ENCODE measurements at regions of chr6 and their contacts with region 1.

Region 1: GRCh38 chr6:109455502-109456282 is at the start of gene MICAL1:
- DNase-seq: peak; percentile 79
- ATAC-seq: peak; percentile 54
- H3K4me3 Mint-ChIP-seq: peak within 1 kb of the TSS; percentile 90
- H3K27ac Mint-ChIP-seq: peak within 1 kb of the TSS; percentile 97
- H3K4me1 Mint-ChIP-seq: peaks cover 70% of the 10 kb centered on the region
- H3K27me3 Mint-ChIP-seq: no peaks in the 10 kb centered on the region
- CTCF ChIP-seq: peak; percentile 16
- total RNA-seq, gene MICAL1: 17.7 TPM

Region 2: DNA sequence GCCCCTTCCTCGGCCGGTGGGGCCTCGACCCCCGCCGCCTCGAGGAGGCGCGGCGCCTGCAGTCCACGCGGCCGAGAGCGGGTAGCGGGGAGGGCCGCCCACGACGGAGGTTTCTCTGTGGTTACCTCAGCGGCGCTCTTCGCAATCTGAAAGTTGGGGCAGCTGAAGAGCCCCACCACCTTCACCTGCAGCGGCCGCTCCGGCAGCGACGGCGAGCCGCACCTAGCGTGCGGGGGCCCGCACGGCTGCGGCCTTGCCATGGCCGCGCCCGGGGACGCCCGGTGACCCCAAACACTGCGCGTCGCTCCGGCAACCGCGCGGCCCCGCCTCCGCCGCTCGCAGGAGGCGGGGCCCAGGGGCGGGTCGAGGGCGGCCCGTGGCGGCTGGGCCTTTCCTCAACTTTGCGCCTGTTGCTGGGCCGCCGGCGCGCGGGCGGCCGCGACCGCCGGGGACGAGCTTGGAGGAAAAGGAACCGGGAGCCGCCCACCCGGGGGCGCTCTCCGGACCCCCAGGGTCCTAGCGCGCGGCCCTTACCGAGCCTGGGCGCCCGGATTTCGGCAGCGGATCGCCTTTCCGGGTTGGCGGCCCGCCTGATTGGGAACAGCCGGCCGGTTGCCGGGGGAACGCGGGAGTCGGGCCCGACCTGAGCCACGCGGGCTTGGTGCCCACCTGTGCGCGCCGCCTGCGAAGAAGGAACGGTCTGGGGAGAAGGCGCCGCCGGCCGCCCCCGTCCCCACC is 15.2 kb before region 1 on chr6 and contains the starts of genes PPIL6 and SMPD2:
- CTCF ChIA-PET with region 1: interaction called, 10 read pairs
- POLR2A ChIA-PET with region 1: interaction called, 119 read pairs
- intact Hi-C with region 1: loop called (anchors 2 kb)
- DNase-seq: peak; percentile 80
- ATAC-seq: peak; percentile 91
- H3K4me3 Mint-ChIP-seq: peak within 1 kb of the TSS; percentile 92
- H3K27ac Mint-ChIP-seq: peak within 1 kb of the TSS; percentile 89
- H3K4me1 Mint-ChIP-seq: peaks cover 26% of the 10 kb centered on the region
- H3K27me3 Mint-ChIP-seq: no peaks in the 10 kb centered on the region
- CTCF ChIP-seq: no peak
- total RNA-seq, gene PPIL6: 0.27 to 0.38 TPM
- total RNA-seq, gene SMPD2: 8.7 to 9.6 TPM

Region 3: GRCh38 chr6:109910571-109910970 is 454.9 kb after region 1 on chr6:
- CTCF ChIA-PET with region 1: no interaction called
- POLR2A ChIA-PET with region 1: no interaction called
- intact Hi-C with region 1: no loop called
- DNase-seq: no peak
- ATAC-seq: no peak
- H3K4me3 Mint-ChIP-seq: no peak overlapping the region
- H3K27ac Mint-ChIP-seq: no peak overlapping the region
- H3K4me1 Mint-ChIP-seq: no peaks in the 10 kb centered on the region
- H3K27me3 Mint-ChIP-seq: peaks cover 8% of the 10 kb centered on the region
- CTCF ChIP-seq: no peak